Activated naive CD8-positive, alpha-beta T cell treated with anti-CD3 and anti-CD28 coated beads, Interleukin-2, amount 10 ng/mL, durations not matched to agents 7 days and 5 days (primary cell): ENCODE measurements at regions of chr19 and their contacts with region 1.

Region 1: DNA sequence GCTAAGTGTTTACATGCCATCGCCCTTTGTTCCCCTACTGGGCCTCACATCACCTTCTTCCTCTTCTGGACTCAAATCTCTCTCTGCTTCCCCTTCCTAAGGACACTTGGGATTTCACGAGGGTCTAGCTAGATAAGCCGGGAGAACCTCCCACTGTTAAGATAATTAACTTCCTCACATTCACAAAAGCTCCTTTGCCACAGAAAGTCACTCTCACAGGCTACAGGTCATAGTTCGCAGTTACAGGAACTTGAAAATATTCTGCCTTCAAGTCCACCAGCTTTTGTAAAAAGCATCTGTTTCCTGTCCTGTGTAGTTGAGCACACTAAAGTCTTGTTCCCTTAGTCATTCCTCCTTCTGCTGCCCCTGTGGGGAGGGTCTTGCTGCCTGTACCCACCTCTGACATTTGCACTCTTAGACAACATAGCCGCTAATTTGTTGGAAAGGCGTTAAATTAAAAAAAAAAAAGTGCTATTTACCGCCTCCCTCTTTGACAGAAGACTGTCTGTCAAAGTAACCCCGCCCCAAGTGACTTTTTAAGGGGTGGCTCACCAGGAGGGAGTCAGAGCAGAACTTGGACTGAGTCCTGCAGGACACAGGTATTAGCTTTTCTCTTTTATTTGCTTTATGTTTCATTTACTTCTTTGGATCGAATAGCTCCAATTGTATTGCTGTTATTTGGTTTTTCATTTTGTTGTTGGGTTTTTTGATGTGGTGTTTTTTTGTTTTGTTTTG is 26.8 kb upstream of the CEACAM21 start:
- DNase-seq: peak; percentile 82
- ATAC-seq: peak; percentile 73
- H3K4me3 Mint-ChIP-seq: peak overlapping the region; percentile 93
- H3K27ac Mint-ChIP-seq: peak overlapping the region; percentile 99
- H3K4me1 Mint-ChIP-seq: peaks cover 52% of the 10 kb centered on the region
- H3K27me3 Mint-ChIP-seq: no peaks in the 10 kb centered on the region

Region 2: DNA sequence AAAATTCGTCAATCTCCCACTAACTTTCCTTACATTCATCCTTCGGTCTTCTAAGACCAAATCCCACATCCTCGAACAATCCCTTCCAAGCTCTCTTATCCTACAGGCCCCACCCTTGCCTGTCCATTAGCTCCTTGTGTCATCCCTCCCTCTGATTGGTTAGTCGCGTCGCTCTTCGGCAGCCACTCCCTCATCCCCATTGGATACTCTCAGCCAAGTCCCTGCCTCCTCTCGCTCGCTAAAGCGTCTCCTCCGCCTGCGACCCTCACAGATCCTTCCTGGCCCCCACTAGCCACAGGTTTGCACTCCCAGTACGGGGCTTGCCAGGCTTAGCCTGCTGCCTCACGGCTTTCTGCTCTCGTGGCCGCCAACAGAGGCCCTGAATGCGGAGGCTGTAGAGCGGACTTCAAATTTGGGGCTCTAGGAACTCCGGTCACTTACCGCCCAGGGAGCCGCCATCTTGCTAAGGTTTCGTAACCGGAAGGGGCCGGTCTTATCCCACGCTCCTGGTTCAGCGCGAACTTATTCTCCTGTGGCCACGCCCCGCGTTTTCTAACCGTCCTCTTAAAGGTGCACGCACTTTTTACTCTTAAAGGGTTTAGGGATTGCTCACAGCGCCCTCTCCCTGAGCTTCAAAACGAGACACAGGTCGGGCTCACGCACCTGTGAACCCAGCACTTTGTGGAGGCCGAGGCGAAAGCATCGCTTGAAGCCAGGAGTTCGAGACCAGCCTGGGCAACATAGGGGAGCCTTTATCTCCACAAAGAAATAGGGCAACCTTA is 109.5 kb before region 1 on chr19 and contains the start of gene DMAC2:
- POLR2A ChIA-PET with region 1: interaction called, 11 read pairs
- DNase-seq: peak; percentile 89
- ATAC-seq: peak; percentile 96
- H3K4me3 Mint-ChIP-seq: no peak within 1 kb of the TSS
- H3K27ac Mint-ChIP-seq: peak within 1 kb of the TSS; percentile 47
- H3K4me1 Mint-ChIP-seq: peaks cover 12% of the 10 kb centered on the region
- H3K27me3 Mint-ChIP-seq: peaks cover 3% of the 10 kb centered on the region
- total RNA-seq, gene DMAC2: 41.3 to 42.6 TPM

Region 3: GRCh38 chr19:41457241-41457640 is 91.9 kb before region 1 on chr19:
- POLR2A ChIA-PET with region 1: interaction called, 10 read pairs
- DNase-seq: no peak
- ATAC-seq: peak; percentile 99
- H3K4me3 Mint-ChIP-seq: peak overlapping the region; percentile 70
- H3K27ac Mint-ChIP-seq: peak overlapping the region; percentile 82
- H3K4me1 Mint-ChIP-seq: peaks cover 21% of the 10 kb centered on the region
- H3K27me3 Mint-ChIP-seq: peaks cover 8% of the 10 kb centered on the region

Region 4: DNA sequence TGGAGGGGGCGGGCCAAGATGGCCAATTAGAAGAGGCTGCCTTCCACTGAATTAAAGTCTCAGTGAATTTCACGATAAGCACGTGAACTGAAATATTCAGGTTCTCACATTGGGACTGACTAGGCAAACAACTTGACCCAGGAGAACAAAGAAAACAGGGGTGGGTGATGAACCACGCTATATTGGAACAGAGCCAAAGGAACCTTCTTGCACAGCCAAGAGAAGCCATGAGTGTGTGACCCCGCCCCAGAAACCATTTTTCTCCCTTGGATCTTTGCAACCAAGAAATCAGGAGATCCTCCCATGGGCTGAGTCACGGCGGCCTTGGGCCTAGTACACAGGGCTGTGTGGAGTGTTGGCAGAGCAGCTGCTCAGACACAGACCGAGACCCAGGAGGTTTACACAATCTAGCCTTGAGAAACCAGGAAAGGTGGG is 69.3 kb before region 1 on chr19:
- POLR2A ChIA-PET with region 1: no interaction called
- DNase-seq: no peak
- ATAC-seq: no peak
- H3K4me3 Mint-ChIP-seq: no peak overlapping the region
- H3K27ac Mint-ChIP-seq: no peak overlapping the region
- H3K4me1 Mint-ChIP-seq: no peaks in the 10 kb centered on the region
- H3K27me3 Mint-ChIP-seq: peaks cover 35% of the 10 kb centered on the region

Region 5: GRCh38 chr19:41575998-41576397 is 26.9 kb after region 1 on chr19 and contains the start of gene CEACAM21:
- POLR2A ChIA-PET with region 1: interaction called, 13 read pairs
- DNase-seq: peak; percentile 61
- ATAC-seq: peak; percentile 100
- H3K4me3 Mint-ChIP-seq: peak within 1 kb of the TSS; percentile 81
- H3K27ac Mint-ChIP-seq: peak within 1 kb of the TSS; percentile 77
- H3K4me1 Mint-ChIP-seq: peaks cover 26% of the 10 kb centered on the region
- H3K27me3 Mint-ChIP-seq: no peaks in the 10 kb centered on the region
- total RNA-seq, gene CEACAM21: 75.4 to 75.5 TPM